ENCODE measurements at regions of chr17 and their contacts with region 1.

Region 1: DNA sequence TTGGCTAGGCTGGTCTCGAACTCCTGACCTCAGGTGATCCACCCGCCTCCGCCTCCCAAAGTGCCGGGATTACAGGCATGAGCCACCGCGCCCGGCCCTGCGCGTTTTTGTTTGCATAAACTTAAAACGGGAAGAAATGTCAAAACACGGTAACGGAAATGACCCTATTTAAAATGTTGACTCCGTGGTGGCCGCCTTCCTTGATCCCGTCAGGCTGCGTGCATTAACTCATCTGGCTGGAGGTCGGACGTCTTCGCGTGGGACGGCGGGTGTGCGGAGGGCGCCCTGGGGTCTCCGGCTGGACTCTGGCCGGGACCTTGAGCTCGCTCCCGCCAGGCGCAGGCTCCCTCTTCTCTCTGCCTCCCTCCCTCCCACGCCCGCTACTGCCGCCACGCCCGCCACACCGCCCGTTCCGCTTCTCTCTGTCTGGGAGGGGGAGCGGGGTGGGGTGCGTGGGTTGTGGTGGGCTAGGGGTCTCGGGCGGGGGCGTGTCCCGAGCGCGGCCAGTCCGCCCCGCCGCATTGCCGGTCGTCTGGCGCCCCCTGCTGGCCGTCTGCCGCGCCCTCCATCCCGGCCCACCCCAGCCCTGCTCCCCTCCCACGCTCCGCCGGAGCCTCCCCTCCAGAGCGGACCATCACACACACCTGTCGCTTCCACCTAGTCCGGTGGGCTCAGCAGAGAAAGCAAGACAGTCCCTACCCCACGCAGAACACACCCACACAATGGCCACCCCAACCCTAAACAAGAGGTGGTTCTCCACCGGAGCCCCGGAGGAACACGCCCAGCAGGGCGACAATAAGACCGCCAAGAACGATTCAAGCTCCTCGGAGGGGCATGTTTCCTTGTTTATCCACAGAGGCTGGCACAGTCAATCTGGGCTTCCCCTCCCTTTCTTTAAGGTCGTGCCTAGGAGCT is 1.2 kb upstream of the CCDC42 start:
- DNase-seq: peak; percentile 75 to 92 (median 91)
- ATAC-seq: peak; percentile 95
- H3K4me3 ChIP-seq: peak overlapping the region; percentile 79
- H3K27ac ChIP-seq: no peak overlapping the region
- H3K4me1 ChIP-seq: no peaks in the 10 kb centered on the region
- H3K27me3 ChIP-seq: no peaks in the 10 kb centered on the region

Region 2: GRCh38 chr17:8409966-8410864 is 335.6 kb before region 1 on chr17:
- intact Hi-C with region 1: loop called in 3 of 4 experiments (anchors 5 to 10 kb)
- DNase-seq: peak; percentile 89 to 94 (median 93)
- ATAC-seq: peak; percentile 92 to 95
- H3K4me3 ChIP-seq: no peak overlapping the region
- H3K27ac ChIP-seq: no peak overlapping the region
- H3K4me1 ChIP-seq: no peaks in the 10 kb centered on the region
- H3K27me3 ChIP-seq: no peaks in the 10 kb centered on the region

Region 3: GRCh38 chr17:8572764-8573163 is 173.1 kb before region 1 on chr17:
- intact Hi-C with region 1: loop called in 3 of 4 experiments (anchors 2 to 5 kb)
- DNase-seq: no peak
- ATAC-seq: no peak
- H3K4me3 ChIP-seq: no peak overlapping the region
- H3K27ac ChIP-seq: no peak overlapping the region
- H3K4me1 ChIP-seq: no peaks in the 10 kb centered on the region
- H3K27me3 ChIP-seq: no peaks in the 10 kb centered on the region

Region 4: DNA sequence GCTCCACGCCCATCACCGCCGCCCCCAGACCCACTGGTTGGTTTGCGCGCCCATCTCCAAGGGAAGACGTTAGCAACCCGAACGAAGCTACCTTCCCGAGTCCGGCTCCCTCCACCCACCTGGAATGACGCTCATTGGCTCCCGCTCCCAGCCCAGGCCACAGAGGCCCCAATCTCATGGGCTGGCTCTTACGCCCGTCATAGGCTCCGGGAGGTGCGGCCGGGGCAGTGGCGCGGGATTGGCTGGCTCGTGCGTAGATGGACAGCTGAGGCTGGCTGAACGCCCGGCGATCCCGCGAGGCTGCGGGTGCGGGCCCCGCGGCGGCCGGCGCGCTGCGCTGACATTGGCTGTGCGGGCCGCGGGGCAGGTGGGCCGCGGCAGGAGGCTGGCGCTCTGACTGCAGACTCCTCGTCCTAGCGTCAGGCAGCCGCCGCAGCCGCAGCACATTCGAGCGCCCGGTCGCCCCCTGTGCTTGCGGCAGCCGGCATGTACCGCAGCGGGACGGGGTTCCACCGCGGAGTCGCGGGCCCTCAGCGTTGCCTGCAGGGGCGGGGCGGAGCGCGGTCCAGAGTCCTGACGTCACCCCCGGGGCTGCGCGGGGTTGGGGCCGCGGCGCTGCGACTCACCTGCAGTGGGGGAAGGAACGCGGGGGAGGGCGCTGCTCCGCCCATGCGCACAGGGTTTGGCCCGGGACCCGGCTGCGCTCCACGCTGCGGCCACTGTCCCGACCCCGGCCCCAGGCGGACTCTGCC is 114.9 kb before region 1 on chr17:
- intact Hi-C with region 1: loop called in 1 of 4 experiments (anchors 10 kb)
- DNase-seq: peak; percentile 98 to 99 (median 99)
- ATAC-seq: peak; percentile 99
- H3K4me3 ChIP-seq: peak overlapping the region; percentile 88
- H3K27ac ChIP-seq: peak overlapping the region; percentile 77
- H3K4me1 ChIP-seq: no peaks in the 10 kb centered on the region
- H3K27me3 ChIP-seq: no peaks in the 10 kb centered on the region

Region 5: DNA sequence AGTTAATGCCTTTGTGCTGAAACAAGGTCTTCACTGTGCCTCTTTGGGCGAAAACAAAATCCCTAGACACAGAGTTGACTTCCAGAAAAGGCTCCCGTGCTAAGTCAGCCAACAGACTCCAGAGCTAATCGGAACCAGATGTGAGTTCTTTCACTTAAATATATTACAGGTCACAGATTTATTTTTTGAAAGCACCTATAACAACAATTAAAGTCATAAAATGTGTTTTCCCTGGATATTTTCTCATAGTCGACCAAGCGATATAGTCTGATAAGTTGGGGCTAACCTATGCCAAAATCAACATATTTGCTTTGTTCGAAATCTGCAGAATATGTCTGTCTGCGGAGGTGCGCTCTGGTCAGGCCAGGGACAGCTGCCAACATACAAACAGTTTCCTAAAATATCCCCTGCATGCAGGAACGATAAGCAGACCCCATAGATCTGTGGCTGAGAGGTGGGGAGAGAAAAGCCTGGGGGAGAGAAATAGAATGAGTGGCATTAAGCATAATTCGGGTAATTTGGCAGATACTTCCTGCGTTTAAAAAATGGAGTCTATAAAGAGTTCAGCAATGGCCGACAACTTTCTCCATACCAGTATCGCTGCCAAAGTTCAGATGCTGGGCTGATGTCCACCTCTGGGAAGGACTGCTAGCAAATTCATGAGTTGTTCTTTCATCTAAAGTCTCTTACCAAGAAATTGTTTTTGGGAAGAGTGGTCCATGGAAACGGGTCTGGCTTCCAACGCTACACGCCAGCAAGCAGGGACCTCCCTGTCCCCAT is 64.5 kb before region 1 on chr17:
- intact Hi-C with region 1: loop called in 1 of 4 experiments (anchors 10 kb)
- DNase-seq: peak; percentile 37 to 80 (median 77)
- ATAC-seq: peak; percentile 86 to 91
- H3K4me3 ChIP-seq: peak overlapping the region; percentile 34
- H3K27ac ChIP-seq: peak overlapping the region; percentile 32
- H3K4me1 ChIP-seq: peaks cover 3% of the 10 kb centered on the region
- H3K27me3 ChIP-seq: no peaks in the 10 kb centered on the region

Measured in right cardiac atrium (tissue), 5 donors.